ENCODE measurements at regions of chr5 and their contacts with region 1.

Region 1: DNA sequence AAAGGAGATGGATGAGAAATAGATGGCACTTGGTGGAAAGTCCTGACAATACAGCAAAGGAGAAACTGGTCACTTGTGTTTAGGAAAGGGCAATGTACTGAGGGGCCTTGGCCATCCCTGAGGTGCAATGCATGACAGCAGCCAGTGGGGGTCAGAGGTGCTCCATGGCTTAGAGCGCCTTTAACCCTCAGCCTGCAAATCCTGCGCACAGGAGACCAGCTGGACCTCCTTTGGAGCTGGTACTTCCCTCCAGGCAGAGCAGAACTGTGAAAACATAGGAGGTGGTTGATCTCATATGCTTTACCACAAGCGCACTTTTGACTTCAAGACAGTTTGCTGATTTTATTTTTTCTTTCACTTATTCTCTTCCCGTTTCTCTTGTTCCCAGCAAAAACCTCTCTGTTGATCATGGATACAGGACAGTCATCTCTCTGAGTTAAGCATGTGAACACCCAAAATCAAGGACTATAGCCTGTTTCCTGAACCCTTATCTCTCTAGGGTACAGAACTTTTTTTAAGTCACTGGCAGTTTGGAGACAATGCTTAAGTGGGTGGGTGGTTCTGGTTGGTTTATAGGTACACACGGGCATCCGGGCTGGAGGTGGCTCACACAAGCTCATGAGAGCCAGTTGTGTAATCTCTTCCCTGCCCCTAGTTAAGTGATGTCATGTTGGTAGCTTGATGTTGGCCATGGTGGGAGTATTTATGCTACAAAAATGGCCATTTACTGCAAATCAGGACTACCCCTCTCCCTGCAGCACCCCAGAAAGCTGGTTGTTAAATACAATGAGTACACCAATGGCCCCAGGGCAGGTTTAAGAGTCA is 37.6 kb upstream of the ANKRD55 start:
- DNase-seq: peak; percentile 91

Region 2: DNA sequence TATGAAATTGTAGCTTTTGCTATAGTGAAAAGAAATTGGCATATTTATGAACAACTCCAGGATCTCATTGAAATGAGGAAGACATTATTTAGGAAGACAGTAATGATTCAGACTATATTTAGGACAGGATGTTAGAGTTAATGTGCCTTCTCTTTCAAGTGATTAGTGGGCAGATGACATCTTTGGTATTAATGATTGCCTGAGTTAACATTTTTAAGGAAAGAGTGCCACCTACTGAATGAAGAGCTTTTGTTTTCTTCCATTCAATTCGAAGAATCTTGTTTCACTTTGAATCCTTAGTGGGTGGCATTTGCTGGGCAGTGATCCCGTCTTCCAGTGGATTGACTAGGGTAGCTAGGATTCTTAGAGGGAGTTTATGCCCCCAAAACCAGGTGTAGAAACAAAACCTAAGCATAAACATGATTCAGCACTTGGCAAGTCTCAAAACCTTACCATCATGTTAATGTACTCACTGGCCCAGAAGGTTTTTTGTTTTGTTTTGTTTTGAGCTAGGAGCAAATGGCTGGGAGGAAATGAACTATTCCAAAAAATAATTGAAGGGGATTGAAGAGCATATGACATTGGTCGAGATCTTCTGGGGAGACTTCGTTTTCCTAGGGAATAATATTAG is 567.7 kb after region 1 on chr5:
- in situ Hi-C with region 1: loop called (anchors 10 kb)
- DNase-seq: peak; percentile 67

Region 3: GRCh38 chr5:56918054-56918453 is 647.3 kb after region 1 on chr5:
- in situ Hi-C with region 1: no loop called
- DNase-seq: no peak

Region 4: DNA sequence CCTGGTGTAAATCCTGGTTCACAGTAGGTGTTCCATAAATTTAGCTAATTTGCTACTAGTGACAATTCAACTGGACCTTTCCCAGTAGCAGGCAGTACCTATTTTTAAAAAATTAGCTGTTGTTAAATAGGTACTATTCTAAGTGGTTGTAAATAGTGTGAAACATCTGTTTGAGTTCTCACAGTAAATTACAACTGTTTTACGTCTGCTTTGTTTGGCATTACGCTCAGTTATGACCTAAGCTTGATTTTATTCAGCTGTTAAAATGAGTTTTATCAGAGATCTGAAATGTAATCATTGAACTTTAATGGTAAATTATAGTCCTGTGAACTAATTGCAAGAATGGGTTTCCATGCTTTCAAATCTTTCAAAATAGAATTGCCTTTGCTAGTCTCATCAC is 997.0 kb after region 1 on chr5:
- in situ Hi-C with region 1: loop called (anchors 25 kb)
- DNase-seq: no peak